ENCODE measurements at regions of chrX and their contacts with region 1.

Region 1: DNA sequence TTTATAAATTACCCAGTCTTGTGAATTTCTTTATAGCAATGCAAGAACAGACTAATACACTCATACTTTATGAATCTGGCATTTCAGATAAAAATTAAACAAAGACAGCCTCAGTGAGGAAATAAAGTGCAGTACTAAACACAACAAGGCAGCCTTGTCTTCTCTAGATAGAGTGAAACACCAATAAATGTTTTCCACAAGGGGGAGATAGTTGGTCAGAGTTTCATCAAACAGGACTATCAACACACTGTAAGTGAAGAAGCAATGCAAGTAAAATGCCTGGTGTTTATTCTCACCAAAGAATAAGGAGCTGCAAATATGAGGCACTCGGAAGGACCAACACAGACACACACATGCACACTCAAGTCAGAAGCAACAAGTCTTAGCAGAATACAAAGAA is 62.8 kb downstream of the FAM9B start:
- H3K4me3 Mint-ChIP-seq: no peak overlapping the region
- H3K27ac Mint-ChIP-seq: no peak overlapping the region
- H3K4me1 Mint-ChIP-seq: no peaks in the 10 kb centered on the region
- H3K27me3 Mint-ChIP-seq: peaks cover 16% of the 10 kb centered on the region

Region 2: GRCh38 chrX:9312922-9313867 is 342.1 kb after region 1 on chrX:
- intact Hi-C with region 1: loop called (anchors 10 kb)
- H3K4me3 Mint-ChIP-seq: no peak overlapping the region
- H3K27ac Mint-ChIP-seq: no peak overlapping the region
- H3K4me1 Mint-ChIP-seq: peaks cover 19% of the 10 kb centered on the region
- H3K27me3 Mint-ChIP-seq: no peaks in the 10 kb centered on the region

Region 3: DNA sequence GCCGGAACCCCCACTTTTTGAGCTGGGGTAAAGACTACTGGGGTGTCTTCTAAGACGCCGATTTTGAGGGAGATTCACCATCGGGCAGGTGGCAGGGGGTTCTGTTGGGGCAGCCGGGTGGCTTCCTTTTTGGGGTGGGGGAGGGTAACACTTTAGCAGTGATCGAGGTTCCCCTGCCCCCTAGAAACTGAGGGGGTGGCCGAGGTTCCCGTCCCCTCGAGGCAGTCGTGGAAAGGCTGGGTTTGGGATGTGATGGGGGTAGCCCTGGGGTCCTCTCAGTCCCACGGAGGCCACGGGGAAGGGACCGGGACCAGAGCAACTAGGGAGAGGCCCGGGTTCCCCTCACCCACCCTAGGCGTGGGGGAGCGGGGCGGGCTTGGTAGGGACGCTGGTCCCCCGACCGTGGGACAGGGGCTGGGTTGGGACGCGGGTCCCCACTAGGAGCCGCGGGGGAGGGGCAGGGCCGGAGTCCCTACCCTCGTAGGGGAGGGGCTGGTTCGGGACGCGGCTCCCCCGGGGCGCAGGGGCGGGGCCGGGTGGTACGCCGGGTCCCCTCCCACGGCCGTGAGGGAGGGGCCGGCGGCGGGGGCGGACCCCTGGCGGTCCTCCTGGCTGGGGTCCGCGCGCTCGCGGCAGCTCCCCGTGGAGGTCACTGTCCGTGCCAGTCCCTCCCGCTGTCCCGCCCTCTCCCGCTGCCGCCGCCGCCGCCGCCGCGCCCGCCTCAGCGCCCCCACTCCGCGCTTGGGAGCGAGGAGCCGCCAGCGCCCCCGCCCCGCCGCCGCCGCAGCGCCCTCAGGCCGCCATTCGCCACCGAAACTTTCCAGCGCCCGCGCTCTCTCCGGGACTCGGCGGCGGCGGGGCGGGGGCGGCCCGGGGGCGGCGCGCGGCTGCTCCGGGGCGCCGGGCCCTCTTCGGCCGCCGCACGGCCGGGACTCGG is 493.6 kb after region 1 on chrX and contains the start of gene TBL1X:
- intact Hi-C with region 1: loop called (anchors 10 kb)
- H3K4me3 Mint-ChIP-seq: peak within 1 kb of the TSS; percentile 76
- H3K27ac Mint-ChIP-seq: peak within 1 kb of the TSS; percentile 73
- H3K4me1 Mint-ChIP-seq: peaks cover 46% of the 10 kb centered on the region
- H3K27me3 Mint-ChIP-seq: no peaks in the 10 kb centered on the region

Measured in dendritic cell treated with granulocyte-macrophage colony-stimulating factor and Interleukin-4, amounts not matched to agents 40 ng/mL and 50 ng/mL, for 4 days (primary cell).